ENCODE measurements at regions of chr12 and their contacts with region 1.

Region 1: DNA sequence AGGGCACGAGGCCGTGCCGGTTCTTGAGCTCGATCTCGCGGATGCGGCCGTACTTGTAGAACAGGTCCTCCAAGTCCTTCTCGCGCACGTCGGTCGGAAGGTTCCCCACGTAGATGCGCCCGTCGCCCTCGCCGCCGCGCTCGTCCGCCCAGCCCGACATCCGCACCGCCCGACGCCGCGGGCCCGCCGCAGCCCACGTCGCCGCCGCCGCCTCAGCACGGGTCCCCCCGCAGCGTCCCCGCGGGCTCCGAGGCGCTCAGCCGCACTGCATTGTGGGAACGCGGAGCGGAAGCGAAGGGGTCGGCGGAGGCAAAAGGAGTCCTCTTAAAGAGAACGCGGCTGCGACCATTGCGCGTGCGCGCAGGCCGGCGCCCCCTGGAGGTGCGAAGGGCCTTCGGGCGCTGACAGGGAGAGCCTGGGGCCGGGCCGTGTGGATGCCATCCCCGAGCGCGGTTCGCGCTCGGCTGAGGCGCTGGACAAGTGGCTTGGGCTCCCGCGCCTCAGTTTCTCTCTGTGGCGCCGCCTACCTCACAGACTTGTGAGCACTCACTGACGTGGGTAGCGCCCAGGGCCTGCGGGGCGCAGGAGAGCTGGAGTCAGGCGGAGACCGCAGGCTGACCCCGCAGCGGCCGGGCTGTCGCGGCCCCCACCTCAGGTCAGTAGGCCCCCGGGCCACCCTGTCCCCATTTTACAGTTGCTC is at the start of gene SRSF9:
- DNase-seq: peak; percentile 99
- H3K4me3 ChIP-seq: peak within 1 kb of the TSS; percentile 78 to 88
- H3K27ac ChIP-seq: peak within 1 kb of the TSS; percentile 79 to 93
- H3K4me1 ChIP-seq: peaks cover 0 to 8% of the 10 kb centered on the region in 2 experiments; a peak in 1 of 4 replicates
- H3K27me3 ChIP-seq: no peaks in the 10 kb centered on the region
- CTCF ChIP-seq: peak; percentile 81
- EP300 ChIP-seq: no peak
- RAD21 ChIP-seq: no peak
- polyA plus RNA-seq, gene SRSF9: 164 and 210 TPM in 2 replicates

Region 2: DNA sequence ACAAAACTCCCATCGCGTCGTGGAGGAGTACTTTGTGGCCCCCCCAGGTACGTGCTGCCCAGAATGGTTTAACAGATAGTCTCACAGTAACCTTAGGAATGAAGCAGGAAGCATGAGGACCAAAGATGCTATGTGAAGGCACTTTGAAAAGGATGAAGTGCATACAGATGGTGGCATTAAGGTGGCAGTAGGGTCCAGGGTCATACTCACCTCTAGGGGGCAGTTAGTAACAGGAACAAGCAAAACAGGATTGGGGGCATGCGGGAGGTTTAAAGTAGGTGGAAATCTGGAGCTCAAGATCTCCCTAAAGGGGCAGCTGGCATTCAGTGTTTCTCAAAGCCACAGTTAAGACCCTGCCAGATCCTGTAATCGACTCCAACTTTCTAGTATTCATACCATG is 12.5 kb before region 1 on chr12:
- CTCF ChIA-PET with region 1: interaction called, 52 read pairs
- POLR2A ChIA-PET with region 1: interaction called, 3 read pairs
- DNase-seq: peak; percentile 52
- H3K4me3 ChIP-seq: no peak overlapping the region
- H3K27ac ChIP-seq: no peak overlapping the region
- H3K4me1 ChIP-seq: no peaks in the 10 kb centered on the region
- H3K27me3 ChIP-seq: no peaks in the 10 kb centered on the region
- CTCF ChIP-seq: peak; percentile 47
- EP300 ChIP-seq: no peak
- RAD21 ChIP-seq: peak; percentile 16; the same call in 1 of the 2 replicates

Region 3: DNA sequence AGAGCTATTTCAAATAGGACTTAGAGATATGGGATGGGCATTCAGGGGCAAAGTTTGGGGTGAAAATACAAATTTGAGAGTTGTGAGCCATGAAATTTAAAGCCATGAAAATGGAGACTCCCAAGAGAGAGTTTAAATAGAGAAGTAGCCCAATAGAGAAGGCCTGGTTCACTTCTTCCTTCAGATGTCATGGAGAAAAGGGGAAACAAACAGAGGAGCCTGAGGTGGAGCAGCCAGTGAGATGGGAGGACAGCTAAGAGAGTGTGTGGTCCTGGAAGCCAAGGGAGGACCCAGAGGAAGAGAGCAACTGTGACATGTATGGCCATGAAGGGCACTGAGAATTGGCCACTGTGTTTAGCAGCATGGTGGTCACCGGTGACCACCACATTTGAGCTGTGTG is 14.0 kb after region 1 on chr12:
- CTCF ChIA-PET with region 1: interaction called, 18 read pairs
- POLR2A ChIA-PET with region 1: interaction called, 10 read pairs
- DNase-seq: no peak
- H3K4me3 ChIP-seq: no peak overlapping the region
- H3K27ac ChIP-seq: no peak overlapping the region
- H3K4me1 ChIP-seq: peaks cover 0 to 6% of the 10 kb centered on the region in 2 experiments; a peak in 1 of 4 replicates
- H3K27me3 ChIP-seq: no peaks in the 10 kb centered on the region
- CTCF ChIP-seq: no peak
- EP300 ChIP-seq: no peak
- RAD21 ChIP-seq: no peak

Region 4: GRCh38 chr12:120489018-120489417 is 19.4 kb after region 1 on chr12:
- CTCF ChIA-PET with region 1: interaction called, 18 read pairs
- POLR2A ChIA-PET with region 1: interaction called, 3 read pairs
- DNase-seq: no peak
- H3K4me3 ChIP-seq: no peak overlapping the region
- H3K27ac ChIP-seq: no peak overlapping the region
- H3K4me1 ChIP-seq: peaks cover 0 to 6% of the 10 kb centered on the region in 2 experiments; a peak in 1 of 4 replicates
- H3K27me3 ChIP-seq: no peaks in the 10 kb centered on the region
- CTCF ChIP-seq: no peak
- EP300 ChIP-seq: no peak
- RAD21 ChIP-seq: no peak

Region 5: DNA sequence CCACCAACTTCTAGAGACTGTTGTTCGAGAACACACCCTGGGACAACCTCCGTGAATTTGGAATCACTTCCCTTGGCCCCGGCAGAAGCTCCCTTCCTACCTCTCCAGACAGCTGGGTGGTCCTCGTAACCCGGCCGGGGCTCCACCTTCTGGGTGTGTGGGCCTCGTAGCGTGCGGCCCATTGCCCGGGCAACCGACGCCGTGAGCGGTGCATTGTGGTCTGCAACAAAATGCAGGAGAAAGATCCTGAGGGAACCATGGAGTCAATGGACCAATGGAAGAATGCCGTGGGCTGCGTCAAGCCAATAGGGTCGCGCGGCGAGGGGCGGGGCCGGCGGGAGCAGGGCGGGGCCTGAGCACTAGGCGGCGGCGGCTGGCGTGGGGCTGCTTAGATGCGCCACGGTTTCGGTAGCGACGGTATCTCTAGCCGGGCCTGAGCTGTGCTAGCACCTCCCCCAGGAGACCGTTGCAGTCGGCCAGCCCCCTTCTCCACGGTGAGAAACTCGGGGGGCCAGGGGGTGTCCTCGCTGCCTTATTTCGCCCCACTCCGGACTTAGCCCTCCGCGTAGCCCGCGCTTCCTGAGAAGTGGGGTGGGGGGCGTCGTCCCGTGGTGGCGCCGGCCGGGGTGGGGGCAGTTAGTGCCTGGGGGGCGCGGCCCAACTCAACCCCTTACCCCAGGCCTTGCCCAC is 26.3 kb after region 1 on chr12 and contains the start of gene DYNLL1:
- CTCF ChIA-PET with region 1: interaction called, 18 read pairs
- POLR2A ChIA-PET with region 1: interaction called, 12 read pairs
- DNase-seq: peak; percentile 98
- H3K4me3 ChIP-seq: peak within 1 kb of the TSS; percentile 83 to 89
- H3K27ac ChIP-seq: peak within 1 kb of the TSS; percentile 63 to 88; a peak in 3 of 4 replicates
- H3K4me1 ChIP-seq: peaks cover 0 to 11% of the 10 kb centered on the region in 2 experiments; a peak in 2 of 4 replicates
- H3K27me3 ChIP-seq: no peaks in the 10 kb centered on the region
- CTCF ChIP-seq: no peak
- EP300 ChIP-seq: no peak
- RAD21 ChIP-seq: no peak
- polyA plus RNA-seq, gene DYNLL1: 596 and 607 TPM in 2 replicates

Measured in SK-N-SH (cell line).